Endothelial cell of umbilical vein (primary cell): ENCODE measurements at regions of chr11 and their contacts with region 1.

Region 1: GRCh38 chr11:75328426-75329277 is 22.8 kb downstream of the ARRB1 start:
- DNase-seq: peak; percentile 84
- H3K4me3 ChIP-seq: no peak overlapping the region
- H3K27ac ChIP-seq: no peak overlapping the region
- H3K4me1 ChIP-seq: peaks cover 33% of the 10 kb centered on the region
- H3K27me3 ChIP-seq: no peaks in the 10 kb centered on the region
- CTCF ChIP-seq: peak; percentile 51 to 61
- POLR2A ChIP-seq: no peak

Region 2: GRCh38 chr11:75195121-75195551 is 133.5 kb before region 1 on chr11:
- CTCF ChIA-PET with region 1: no interaction called
- POLR2A ChIA-PET with region 1: no interaction called
- dilution Hi-C with region 1: no loop called
- intact Hi-C with region 1: no loop called
- DNase-seq: peak; percentile 10
- H3K4me3 ChIP-seq: no peak overlapping the region
- H3K27ac ChIP-seq: no peak overlapping the region
- H3K4me1 ChIP-seq: peaks cover 4% of the 10 kb centered on the region
- H3K27me3 ChIP-seq: peaks cover 0 to 2% of the 10 kb centered on the region in 2 experiments
- CTCF ChIP-seq: no peak
- POLR2A ChIP-seq: no peak

Region 3: GRCh38 chr11:75293903-75294302 is 34.7 kb before region 1 on chr11:
- CTCF ChIA-PET with region 1: no interaction called
- POLR2A ChIA-PET with region 1: no interaction called
- dilution Hi-C with region 1: no loop called
- intact Hi-C with region 1: loop called (anchors 1 kb)
- DNase-seq: no peak
- H3K4me3 ChIP-seq: no peak overlapping the region
- H3K27ac ChIP-seq: no peak overlapping the region
- H3K4me1 ChIP-seq: peaks cover 15% of the 10 kb centered on the region
- H3K27me3 ChIP-seq: no peaks in the 10 kb centered on the region
- CTCF ChIP-seq: no peak
- POLR2A ChIP-seq: no peak

Region 4: DNA sequence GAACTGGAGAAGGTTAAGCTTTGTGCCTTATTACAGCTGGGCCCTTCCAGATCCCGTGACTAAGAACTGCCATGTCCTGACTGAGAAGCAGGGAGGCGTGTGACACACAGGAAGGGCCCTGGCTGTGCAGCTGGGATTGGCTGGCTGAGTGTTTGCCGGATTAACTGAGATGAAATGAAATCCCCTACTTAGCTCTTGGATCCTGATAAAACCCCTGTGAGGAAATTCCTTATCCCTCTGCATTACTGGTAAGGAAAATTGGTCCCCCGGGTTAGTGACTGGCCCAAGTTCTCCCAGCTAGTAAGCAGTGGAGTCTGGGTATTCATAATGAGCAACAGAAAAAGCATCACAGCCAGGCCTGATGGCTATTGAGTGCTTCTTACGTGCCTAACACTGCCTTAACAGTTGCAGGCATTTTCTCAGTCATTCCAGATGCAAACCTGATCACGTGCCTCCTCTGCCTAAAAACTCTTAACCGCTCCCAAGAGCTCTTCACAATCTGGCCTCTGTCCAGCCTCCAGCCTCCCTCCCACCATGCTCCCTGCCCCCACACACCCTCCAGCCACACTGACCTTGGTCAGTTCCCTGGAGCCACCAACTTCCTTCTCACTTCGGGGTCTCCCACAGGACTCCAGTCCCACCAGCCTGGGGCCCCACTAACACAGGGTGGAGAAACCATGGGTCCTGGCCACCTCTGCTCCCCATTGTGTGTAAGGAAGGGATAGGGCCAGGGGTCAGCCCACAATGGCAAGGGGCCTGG is 15.0 kb before region 1 on chr11:
- CTCF ChIA-PET with region 1: interaction called, 9 read pairs
- POLR2A ChIA-PET with region 1: no interaction called
- dilution Hi-C with region 1: no loop called
- intact Hi-C with region 1: loop called (anchors 1 kb)
- DNase-seq: peak; percentile 90
- H3K4me3 ChIP-seq: no peak overlapping the region
- H3K27ac ChIP-seq: peak overlapping the region; percentile 72
- H3K4me1 ChIP-seq: peaks cover 33% of the 10 kb centered on the region
- H3K27me3 ChIP-seq: no peaks in the 10 kb centered on the region
- CTCF ChIP-seq: no peak
- POLR2A ChIP-seq: peak; percentile 54

Region 5: GRCh38 chr11:75342903-75343870 is 14.5 kb after region 1 on chr11:
- CTCF ChIA-PET with region 1: interaction called, 31 read pairs
- POLR2A ChIA-PET with region 1: interaction called, 4 read pairs
- dilution Hi-C with region 1: no loop called
- intact Hi-C with region 1: loop called (anchors 1 kb)
- DNase-seq: peak; percentile 30
- H3K4me3 ChIP-seq: no peak overlapping the region
- H3K27ac ChIP-seq: no peak overlapping the region
- H3K4me1 ChIP-seq: peaks cover 69% of the 10 kb centered on the region
- H3K27me3 ChIP-seq: no peaks in the 10 kb centered on the region
- CTCF ChIP-seq: no peak
- POLR2A ChIP-seq: no peak

Region 6: DNA sequence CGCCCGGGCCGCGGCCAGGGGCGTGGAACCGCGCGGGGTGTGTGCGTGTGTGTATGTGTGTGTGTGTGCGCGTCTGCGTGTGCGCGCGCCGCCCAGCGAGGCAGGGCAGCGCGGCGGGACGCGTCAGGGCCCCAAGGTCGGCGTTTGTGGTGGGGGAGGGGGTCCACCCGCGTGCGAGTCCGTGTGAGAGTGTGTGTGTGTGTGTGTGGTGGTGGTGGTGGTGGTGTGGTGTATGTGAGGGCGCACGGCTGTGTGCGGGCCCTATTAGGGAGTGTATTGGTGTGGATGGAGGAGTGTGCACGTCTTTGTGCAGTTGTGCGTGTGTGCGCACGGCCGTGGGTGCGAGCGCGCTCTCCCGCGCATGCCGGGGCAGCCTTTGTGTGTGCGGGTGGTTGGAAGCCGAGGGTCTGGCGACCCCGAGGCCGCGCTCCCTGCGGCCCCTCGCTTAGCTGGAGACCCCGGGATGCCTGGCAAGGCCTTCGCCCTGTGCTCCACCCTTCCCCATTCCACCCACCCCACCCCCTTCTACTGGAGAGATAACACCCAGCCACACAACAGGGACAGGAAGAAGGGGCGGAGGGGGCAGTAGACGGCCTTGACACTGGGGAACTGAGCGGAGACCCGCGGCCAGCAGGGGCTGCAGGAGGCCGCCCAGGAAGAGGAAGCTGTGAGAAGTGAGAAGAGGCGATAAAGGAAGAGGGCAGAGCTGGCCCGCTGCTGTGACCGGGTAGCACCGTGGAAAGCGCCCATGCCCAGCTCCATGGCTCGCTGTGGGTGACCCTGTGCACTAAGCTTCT is 23.3 kb after region 1 on chr11:
- CTCF ChIA-PET with region 1: interaction called, 5 read pairs
- POLR2A ChIA-PET with region 1: no interaction called
- dilution Hi-C with region 1: no loop called
- intact Hi-C with region 1: loop called (anchors 1 kb)
- DNase-seq: no peak
- H3K4me3 ChIP-seq: peak overlapping the region in 2 of 3 experiments; percentile 33 to 85
- H3K27ac ChIP-seq: no peak overlapping the region
- H3K4me1 ChIP-seq: peaks cover 45% of the 10 kb centered on the region
- H3K27me3 ChIP-seq: no peaks in the 10 kb centered on the region
- CTCF ChIP-seq: no peak
- POLR2A ChIP-seq: peak; percentile 20

Region 7: GRCh38 chr11:75365711-75366181 is 37.1 kb after region 1 on chr11:
- CTCF ChIA-PET with region 1: no interaction called
- POLR2A ChIA-PET with region 1: no interaction called
- dilution Hi-C with region 1: no loop called
- intact Hi-C with region 1: no loop called
- DNase-seq: peak; percentile 60
- H3K4me3 ChIP-seq: no peak overlapping the region
- H3K27ac ChIP-seq: no peak overlapping the region
- H3K4me1 ChIP-seq: peaks cover 7% of the 10 kb centered on the region
- H3K27me3 ChIP-seq: peaks cover 0 to 1% of the 10 kb centered on the region in 2 experiments
- CTCF ChIP-seq: no peak
- POLR2A ChIP-seq: no peak

Region 8: GRCh38 chr11:75474878-75475766 is 146.5 kb after region 1 on chr11:
- CTCF ChIA-PET with region 1: no interaction called
- POLR2A ChIA-PET with region 1: no interaction called
- dilution Hi-C with region 1: no loop called
- intact Hi-C with region 1: no loop called
- DNase-seq: no peak
- H3K4me3 ChIP-seq: no peak overlapping the region
- H3K27ac ChIP-seq: no peak overlapping the region
- H3K4me1 ChIP-seq: peaks cover 26% of the 10 kb centered on the region
- H3K27me3 ChIP-seq: no peaks in the 10 kb centered on the region
- CTCF ChIP-seq: no peak
- POLR2A ChIP-seq: no peak